Mammary epithelial cell (primary cell): ENCODE measurements at regions of chr10 and their contacts with region 1.

Region 1: GRCh38 chr10:93672022-93672678 is 30.2 kb downstream of the FRA10AC1 start:
- DNase-seq: no peak
- H3K4me3 ChIP-seq: no peak overlapping the region
- H3K27ac ChIP-seq: no peak overlapping the region
- H3K4me1 ChIP-seq: no peaks in the 10 kb centered on the region
- H3K27me3 ChIP-seq: no peaks in the 10 kb centered on the region
- CTCF ChIP-seq: no peak

Region 2: GRCh38 chr10:93573051-93573909 is 98.9 kb before region 1 on chr10:
- CTCF ChIA-PET with region 1: no interaction called
- dilution Hi-C with region 1: no loop called
- in situ Hi-C with region 1: loop called in 1 of 2 experiments (anchors 10 kb)
- intact Hi-C with region 1: no loop called
- DNase-seq: peak; percentile 52
- H3K4me3 ChIP-seq: no peak overlapping the region
- H3K27ac ChIP-seq: no peak overlapping the region
- H3K4me1 ChIP-seq: peaks cover 6% of the 10 kb centered on the region
- H3K27me3 ChIP-seq: peaks cover 6% of the 10 kb centered on the region
- CTCF ChIP-seq: no peak